T-cell (primary cell): ENCODE measurements at regions of chr2 and their contacts with region 1.

Region 1: DNA sequence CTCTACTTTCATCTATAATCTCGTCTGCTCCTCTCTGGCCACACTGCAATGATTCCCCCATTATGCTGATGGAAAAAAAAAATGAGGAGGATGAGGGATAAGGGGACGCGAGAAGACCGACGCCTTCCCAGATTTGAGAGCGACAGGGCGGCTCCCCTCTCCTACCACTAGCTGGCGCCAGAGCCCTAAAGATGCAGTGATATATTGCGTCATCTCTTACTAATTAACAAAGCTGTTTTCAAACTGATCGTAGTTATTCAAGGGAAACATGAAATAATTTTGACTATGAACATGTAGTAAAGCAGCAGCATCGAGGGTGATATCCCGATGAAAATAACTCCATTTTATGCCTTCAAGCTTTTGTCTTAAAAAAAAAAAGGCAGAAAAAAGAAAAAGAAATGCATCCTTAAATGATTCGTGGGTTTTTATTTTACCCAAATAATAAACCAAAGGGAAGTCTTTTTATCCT is 48.0 kb upstream of the HNRNPA3 start:
- DNase-seq: peak; percentile 50 to 89 (median 73)
- ATAC-seq: peak; percentile 71 to 83 (median 80)
- H3K4me3 ChIP-seq: peak overlapping the region; percentile 2 to 31
- H3K4me3 Mint-ChIP-seq: no peak overlapping the region
- H3K27ac ChIP-seq: peak overlapping the region; percentile 47
- H3K27ac Mint-ChIP-seq: no peak overlapping the region
- H3K4me1 ChIP-seq: peaks cover 13 to 16% of the 10 kb centered on the region in 2 experiments
- H3K4me1 Mint-ChIP-seq: peaks cover 12 to 21% (median 20%) of the 10 kb centered on the region in 3 donors
- H3K27me3 ChIP-seq: no peaks in the 10 kb centered on the region
- H3K27me3 Mint-ChIP-seq: peaks cover 0 to 2% of the 10 kb centered on the region in 2 donors

Region 2: DNA sequence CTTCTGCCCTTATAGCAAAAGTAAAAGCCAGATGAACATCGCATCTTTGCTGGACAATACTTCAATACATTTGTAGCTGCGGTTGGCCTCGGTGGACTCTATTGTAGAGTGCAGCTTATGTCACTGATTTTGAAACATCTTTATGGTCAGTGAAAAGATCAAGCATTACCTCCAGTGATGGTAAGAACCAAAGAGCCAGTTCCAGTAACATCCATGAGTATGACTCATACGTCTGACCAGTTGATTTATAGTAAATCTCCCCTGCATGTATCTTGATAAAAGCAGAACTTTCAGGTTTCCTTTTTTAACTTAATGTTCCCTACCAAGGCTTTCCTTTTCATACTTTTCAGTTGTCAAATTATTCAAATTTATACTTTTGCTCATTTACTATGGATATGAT is 71.2 kb before region 1 on chr2:
- CTCF ChIA-PET with region 1: no interaction called
- POLR2A ChIA-PET with region 1: no interaction called
- DNase-seq: no peak
- ATAC-seq: no peak
- H3K4me3 ChIP-seq: no peak overlapping the region
- H3K4me3 Mint-ChIP-seq: no peak overlapping the region
- H3K27ac ChIP-seq: no peak overlapping the region
- H3K27ac Mint-ChIP-seq: no peak overlapping the region
- H3K4me1 ChIP-seq: no peaks in the 10 kb centered on the region
- H3K4me1 Mint-ChIP-seq: no peaks in the 10 kb centered on the region
- H3K27me3 ChIP-seq: peaks cover 0 to 11% of the 10 kb centered on the region in 2 experiments
- H3K27me3 Mint-ChIP-seq: peaks cover 18 to 24% of the 10 kb centered on the region in 2 donors

Region 3: GRCh38 chr2:177212106-177212890 is 47.7 kb after region 1 on chr2 and contains the start of gene HNRNPA3:
- CTCF ChIA-PET with region 1: interaction called, 4 to 18 read pairs
- POLR2A ChIA-PET with region 1: interaction called, 3 to 10 read pairs
- DNase-seq: peak; percentile 98 to 100 (median 100)
- ATAC-seq: peak; percentile 84 to 91 (median 87)
- H3K4me3 ChIP-seq: peak within 1 kb of the TSS; percentile 86 to 94
- H3K4me3 Mint-ChIP-seq: peak within 1 kb of the TSS; percentile 90 to 92 (median 92)
- H3K27ac ChIP-seq: peak within 1 kb of the TSS; percentile 100
- H3K27ac Mint-ChIP-seq: peak within 1 kb of the TSS; percentile 99
- H3K4me1 ChIP-seq: peaks cover 23 to 34% of the 10 kb centered on the region in 2 experiments
- H3K4me1 Mint-ChIP-seq: peaks cover 51 to 57% (median 54%) of the 10 kb centered on the region in 3 donors
- H3K27me3 ChIP-seq: no peaks in the 10 kb centered on the region
- H3K27me3 Mint-ChIP-seq: no peaks in the 10 kb centered on the region
- total RNA-seq, gene HNRNPA3: 134 to 220 (median 151) TPM

Region 4: GRCh38 chr2:177239932-177240630 is 75.5 kb after region 1 on chr2:
- CTCF ChIA-PET with region 1: interaction called in 1 of 2 experiments, 14 read pairs
- POLR2A ChIA-PET with region 1: interaction called, 3 to 5 read pairs
- DNase-seq: peak in 21 of 35 experiments; percentile 8 to 66 (median 22)
- ATAC-seq: peak; percentile 63 to 79 (median 75)
- H3K4me3 ChIP-seq: no peak overlapping the region
- H3K4me3 Mint-ChIP-seq: peak overlapping the region; percentile 43 to 60 (median 49)
- H3K27ac ChIP-seq: peak overlapping the region; percentile 72
- H3K27ac Mint-ChIP-seq: peak overlapping the region; percentile 85 to 88
- H3K4me1 ChIP-seq: peaks cover 40 to 42% of the 10 kb centered on the region in 2 experiments
- H3K4me1 Mint-ChIP-seq: peaks cover 84 to 94% (median 86%) of the 10 kb centered on the region in 3 donors
- H3K27me3 ChIP-seq: no peaks in the 10 kb centered on the region
- H3K27me3 Mint-ChIP-seq: no peaks in the 10 kb centered on the region

Region 5: GRCh38 chr2:177296040-177296439 is 131.4 kb after region 1 on chr2:
- CTCF ChIA-PET with region 1: interaction called, 21 to 55 read pairs
- POLR2A ChIA-PET with region 1: no interaction called
- DNase-seq: peak in 1 of 35 experiments; percentile 64
- ATAC-seq: peak; percentile 50 to 59 (median 58)
- H3K4me3 ChIP-seq: no peak overlapping the region
- H3K4me3 Mint-ChIP-seq: no peak overlapping the region
- H3K27ac ChIP-seq: no peak overlapping the region
- H3K27ac Mint-ChIP-seq: no peak overlapping the region
- H3K4me1 ChIP-seq: peaks cover 0 to 6% of the 10 kb centered on the region in 2 experiments
- H3K4me1 Mint-ChIP-seq: peaks cover 13 to 18% (median 15%) of the 10 kb centered on the region in 3 donors
- H3K27me3 ChIP-seq: no peaks in the 10 kb centered on the region
- H3K27me3 Mint-ChIP-seq: no peaks in the 10 kb centered on the region

Region 6: DNA sequence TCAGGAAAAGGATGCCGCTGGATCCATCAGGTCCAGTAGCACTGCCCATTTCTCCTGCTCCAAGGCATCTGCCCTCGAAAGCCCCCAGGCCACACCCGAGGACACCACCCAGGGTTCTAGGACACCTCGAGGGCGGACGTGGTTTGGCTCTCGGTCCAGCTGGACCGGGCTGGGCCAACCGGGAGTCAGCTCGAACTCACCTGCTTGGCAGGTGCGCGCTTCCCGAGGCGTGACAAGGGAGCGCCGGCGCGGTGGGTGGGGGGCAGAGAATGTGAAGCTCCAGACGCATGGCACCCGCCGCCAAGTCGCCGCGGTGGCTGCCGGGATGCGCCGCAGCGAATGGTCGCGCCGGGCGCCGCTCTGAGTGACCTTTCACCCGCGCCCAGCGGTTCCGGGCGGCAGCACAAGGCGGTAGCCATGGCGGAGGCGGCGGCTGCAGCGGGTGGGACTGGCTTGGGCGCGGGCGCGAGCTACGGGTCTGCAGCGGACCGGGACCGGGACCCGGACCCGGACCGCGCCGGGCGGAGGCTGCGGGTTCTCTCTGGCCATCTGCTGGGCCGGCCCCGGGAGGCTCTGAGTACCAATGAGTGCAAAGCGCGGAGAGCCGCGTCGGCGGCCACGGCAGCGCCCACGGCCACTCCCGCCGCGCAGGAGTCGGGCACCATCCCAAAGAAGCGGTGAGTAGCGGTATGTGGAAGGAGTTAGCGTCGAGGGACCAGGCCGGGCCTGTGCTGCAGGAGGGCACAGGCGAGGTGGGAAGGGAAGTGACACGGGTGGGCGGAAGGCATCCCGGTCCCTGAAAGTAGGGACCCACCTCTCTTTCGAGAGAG is 228.0 kb after region 1 on chr2 and contains the start of gene AGPS:
- CTCF ChIA-PET with region 1: interaction called, 4 to 16 read pairs
- POLR2A ChIA-PET with region 1: interaction called, 6 to 8 read pairs
- DNase-seq: peak; percentile 45 to 82 (median 65)
- ATAC-seq: peak; percentile 93 to 97 (median 94)
- H3K4me3 ChIP-seq: peak within 1 kb of the TSS; percentile 59 to 94
- H3K4me3 Mint-ChIP-seq: peak within 1 kb of the TSS; percentile 84 to 94 (median 91)
- H3K27ac ChIP-seq: peak within 1 kb of the TSS; percentile 40
- H3K27ac Mint-ChIP-seq: peak within 1 kb of the TSS; percentile 56 to 87
- H3K4me1 ChIP-seq: peaks cover 15 to 18% of the 10 kb centered on the region in 2 experiments
- H3K4me1 Mint-ChIP-seq: peaks cover 52 to 68% (median 64%) of the 10 kb centered on the region in 3 donors
- H3K27me3 ChIP-seq: no peaks in the 10 kb centered on the region
- H3K27me3 Mint-ChIP-seq: no peaks in the 10 kb centered on the region
- total RNA-seq, gene AGPS: 26.1 to 32.3 (median 29.6) TPM

Region 7: GRCh38 chr2:177724398-177725287 is 560.0 kb after region 1 on chr2:
- CTCF ChIA-PET with region 1: interaction called in 1 of 2 experiments, 16 read pairs
- POLR2A ChIA-PET with region 1: no interaction called
- DNase-seq: peak in 23 of 35 experiments; percentile 2 to 59 (median 18)
- ATAC-seq: peak in 1 of 4 experiments; percentile 55
- H3K4me3 ChIP-seq: no peak overlapping the region
- H3K4me3 Mint-ChIP-seq: no peak overlapping the region
- H3K27ac ChIP-seq: no peak overlapping the region
- H3K27ac Mint-ChIP-seq: no peak overlapping the region
- H3K4me1 ChIP-seq: no peaks in the 10 kb centered on the region
- H3K4me1 Mint-ChIP-seq: no peaks in the 10 kb centered on the region
- H3K27me3 ChIP-seq: no peaks in the 10 kb centered on the region
- H3K27me3 Mint-ChIP-seq: peaks cover 20 to 25% of the 10 kb centered on the region in 2 donors